K562 (cell line): ENCODE measurements at regions of chr3 and their contacts with region 1.

Region 1: DNA sequence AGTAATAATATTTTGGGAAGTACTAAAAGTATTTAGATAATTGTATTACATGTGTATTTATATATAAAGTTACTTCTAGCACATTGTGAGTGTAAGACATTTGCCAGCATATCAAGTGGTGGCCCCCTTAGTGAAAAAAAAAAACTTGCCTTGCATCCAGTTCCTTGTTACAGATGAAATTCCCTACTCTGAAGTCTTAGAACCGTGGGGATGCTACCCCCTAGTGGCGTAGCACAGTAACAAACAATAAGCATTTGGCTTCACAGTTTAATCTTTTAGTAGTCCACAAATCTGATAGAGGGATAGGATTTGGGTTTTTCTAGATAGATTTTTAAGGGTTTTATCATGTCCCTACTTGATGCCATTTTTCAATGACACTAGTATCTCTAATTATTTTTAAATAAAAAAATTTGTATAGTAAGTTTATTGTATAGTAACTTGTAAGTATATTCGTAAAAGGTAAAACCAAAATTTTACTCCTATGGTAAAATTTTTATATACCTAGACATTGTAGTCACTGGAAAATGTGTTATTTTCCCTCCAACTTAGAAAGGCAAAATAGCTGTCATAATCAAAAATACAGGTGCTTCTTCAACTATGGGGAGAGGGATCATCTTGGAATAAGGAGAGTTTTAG is 14.3 kb downstream of the SMC4 start:
- DNase-seq: peak; percentile 56 to 80 (median 58)
- ATAC-seq: peak; percentile 82
- H3K4me3 ChIP-seq: no peak overlapping the region
- H3K27ac ChIP-seq: no peak overlapping the region
- H3K4me1 ChIP-seq: no peaks in the 10 kb centered on the region
- H3K27me3 ChIP-seq: no peaks in the 10 kb centered on the region
- CTCF ChIP-seq: peak; percentile 58 to 77 (median 75)
- EP300 ChIP-seq: no peak
- POLR2A ChIP-seq: no peak
- RAD21 ChIP-seq: peak; percentile 60 to 79

Region 2: DNA sequence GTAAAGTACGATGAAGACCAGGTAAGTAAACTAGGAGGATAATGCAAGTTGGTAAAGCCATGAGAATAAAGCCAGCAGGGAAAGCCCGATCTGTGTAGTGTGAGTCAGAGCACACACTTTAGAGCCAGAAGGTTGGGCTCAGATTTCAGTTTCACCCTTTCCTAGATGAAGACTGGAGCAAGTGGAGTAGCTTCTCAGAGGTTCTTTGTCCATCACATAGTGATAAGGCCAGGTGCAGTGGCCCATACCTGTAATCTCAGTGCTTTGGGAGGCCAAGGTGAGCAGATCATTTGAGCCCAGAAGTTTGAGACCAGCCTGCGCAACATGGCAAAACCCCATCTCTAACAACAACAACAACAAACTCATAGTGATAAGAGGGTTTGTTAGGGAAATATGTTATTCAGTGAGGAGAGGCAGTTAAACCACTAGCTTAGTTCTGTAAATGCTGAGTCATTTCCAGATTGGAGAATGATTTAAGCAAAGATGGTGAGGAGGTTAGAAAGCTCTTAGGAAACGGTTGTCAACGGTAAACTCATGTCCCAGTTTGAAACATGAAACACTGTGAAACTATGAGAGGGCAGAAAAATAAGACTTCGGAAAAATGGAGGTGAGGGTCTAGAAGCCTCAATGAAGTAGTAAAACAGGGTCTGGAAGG is 386.1 kb before region 1 on chr3:
- CTCF ChIA-PET with region 1: interaction called, 4 read pairs
- POLR2A ChIA-PET with region 1: no interaction called
- in situ Hi-C with region 1: no loop called
- intact Hi-C with region 1: loop called (anchors 5 kb)
- DNase-seq: peak in 1 of 4 experiments; percentile 4
- ATAC-seq: peak; percentile 52
- H3K4me3 ChIP-seq: no peak overlapping the region
- H3K27ac ChIP-seq: no peak overlapping the region
- H3K4me1 ChIP-seq: no peaks in the 10 kb centered on the region; a peak in 2 of 5 replicates
- H3K27me3 ChIP-seq: peaks cover 0 to 6% of the 10 kb centered on the region in 2 experiments
- CTCF ChIP-seq: no peak
- EP300 ChIP-seq: peak; percentile 13
- POLR2A ChIP-seq: no peak
- RAD21 ChIP-seq: no peak

Region 3: DNA sequence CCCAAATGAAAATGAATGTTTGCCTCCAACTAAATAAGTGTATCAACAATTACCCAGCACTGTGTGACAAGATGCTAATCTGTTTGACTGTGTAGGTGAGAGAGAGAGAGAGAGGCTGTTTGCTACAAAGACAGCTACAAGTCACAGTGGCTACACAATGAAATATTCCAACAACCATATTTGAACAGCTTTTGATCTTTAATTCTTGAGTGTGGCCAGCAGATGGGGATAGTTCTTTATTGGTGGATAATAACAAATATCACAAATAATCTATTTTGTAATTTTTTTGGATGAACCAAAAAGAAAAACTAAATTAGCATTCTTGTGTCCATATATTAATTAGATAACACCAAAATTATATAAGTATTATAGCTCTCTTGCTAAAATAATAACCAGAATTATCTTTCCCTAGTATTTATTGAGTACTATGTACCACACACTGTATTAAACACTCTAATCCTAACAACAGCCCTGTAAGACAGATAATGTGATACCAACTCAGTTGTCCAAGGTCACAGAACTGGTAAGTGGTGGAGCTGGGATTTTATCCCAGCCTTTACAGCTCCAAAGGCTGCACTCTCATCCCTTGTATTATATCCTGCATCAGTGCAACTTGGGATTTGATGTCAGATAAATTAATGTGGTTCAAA is 250.4 kb before region 1 on chr3:
- CTCF ChIA-PET with region 1: interaction called, 21 read pairs
- POLR2A ChIA-PET with region 1: interaction called, 3 read pairs
- in situ Hi-C with region 1: no loop called
- intact Hi-C with region 1: loop called (anchors 2 kb)
- DNase-seq: peak in 2 of 4 experiments; percentile 12 to 14
- ATAC-seq: peak; percentile 66
- H3K4me3 ChIP-seq: no peak overlapping the region
- H3K27ac ChIP-seq: no peak overlapping the region
- H3K4me1 ChIP-seq: no peaks in the 10 kb centered on the region
- H3K27me3 ChIP-seq: peaks cover 0 to 2% of the 10 kb centered on the region in 2 experiments; a peak in 1 of 5 replicates
- CTCF ChIP-seq: peak; percentile 35 to 64 (median 38); a peak in 3 of 6 replicates
- EP300 ChIP-seq: no peak
- POLR2A ChIP-seq: no peak
- RAD21 ChIP-seq: peak; percentile 88 to 92

Region 4: DNA sequence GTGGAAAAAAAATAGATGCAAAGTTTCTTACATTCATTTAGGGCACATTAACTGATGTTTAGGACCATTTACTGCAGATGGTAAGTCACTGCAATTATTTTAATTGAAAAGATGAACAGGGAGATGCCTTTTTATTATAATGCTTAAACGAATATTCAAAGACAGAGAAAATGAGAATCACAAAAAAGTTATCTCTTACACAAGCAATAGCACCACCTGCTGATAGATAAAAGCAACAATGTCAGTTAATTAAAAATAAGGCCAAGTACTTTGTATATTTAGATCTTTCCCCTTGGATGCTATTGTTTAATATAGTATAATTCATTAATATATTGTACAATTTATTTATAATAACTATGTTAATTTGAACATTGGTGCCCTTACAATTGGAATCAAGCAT is 70.6 kb before region 1 on chr3:
- CTCF ChIA-PET with region 1: no interaction called
- POLR2A ChIA-PET with region 1: no interaction called
- in situ Hi-C with region 1: no loop called
- intact Hi-C with region 1: loop called (anchors 5 kb)
- DNase-seq: peak in 2 of 4 experiments; percentile 10 to 12
- ATAC-seq: no peak
- H3K4me3 ChIP-seq: no peak overlapping the region
- H3K27ac ChIP-seq: no peak overlapping the region
- H3K4me1 ChIP-seq: no peaks in the 10 kb centered on the region
- H3K27me3 ChIP-seq: no peaks in the 10 kb centered on the region
- CTCF ChIP-seq: peak in 2 of 3 experiments; percentile 35 to 63; a peak in 3 of 6 replicates
- EP300 ChIP-seq: no peak
- POLR2A ChIP-seq: no peak
- RAD21 ChIP-seq: peak; percentile 82 to 85

Region 5: DNA sequence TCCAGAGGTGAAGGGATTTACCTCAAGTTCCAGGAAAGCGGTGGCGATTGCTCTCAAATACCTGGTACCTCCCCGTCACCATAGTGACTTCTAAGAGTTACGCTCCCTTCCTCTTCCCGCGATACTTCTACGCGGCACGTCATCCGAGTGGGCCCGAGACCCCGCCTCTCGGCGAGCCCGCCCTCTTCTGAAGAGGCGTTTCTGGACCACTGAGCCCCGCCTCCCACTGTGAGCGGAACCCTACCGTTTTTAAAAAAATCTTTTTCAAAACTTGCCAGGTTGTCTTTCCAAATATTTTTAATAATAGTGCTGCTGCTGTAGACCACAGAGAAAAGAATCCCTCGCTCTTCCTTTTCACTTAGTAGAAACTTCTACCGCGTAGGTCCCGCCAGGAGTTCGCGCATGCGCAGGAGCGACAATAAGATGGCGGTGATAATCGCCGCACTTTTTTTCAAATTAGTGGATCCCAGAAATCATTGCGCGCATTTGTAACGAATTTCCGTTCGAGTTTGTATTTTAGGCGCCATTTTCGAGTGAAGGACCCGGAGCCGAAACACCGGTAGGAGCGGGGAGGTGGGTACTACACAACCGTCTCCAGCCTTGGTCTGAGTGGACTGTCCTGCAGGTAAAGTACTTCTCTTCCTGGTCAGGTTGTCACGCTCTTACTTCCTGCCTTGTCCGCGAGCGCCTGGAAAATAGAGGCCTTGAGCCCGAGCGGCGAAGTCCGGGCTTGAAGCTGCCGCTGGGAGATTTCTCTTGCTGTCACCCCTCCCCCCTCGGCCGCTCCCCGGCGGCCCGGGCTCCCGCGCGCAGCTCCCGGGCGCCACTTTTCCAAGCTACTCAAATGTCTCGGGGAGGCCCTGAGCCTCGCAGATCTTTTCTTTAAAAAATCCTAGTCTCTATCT is 14.4 kb before region 1 on chr3 and contains the starts of genes IFT80 and SMC4:
- CTCF ChIA-PET with region 1: no interaction called
- POLR2A ChIA-PET with region 1: interaction called, 38 read pairs
- in situ Hi-C with region 1: no loop called
- intact Hi-C with region 1: no loop called
- DNase-seq: peak; percentile 92 to 97 (median 94)
- ATAC-seq: peak; percentile 81
- H3K4me3 ChIP-seq: peak within 1 kb of the TSS; percentile 71
- H3K27ac ChIP-seq: peak within 1 kb of the TSS; percentile 99
- H3K4me1 ChIP-seq: peaks cover 8 to 14% of the 10 kb centered on the region in 2 experiments
- H3K27me3 ChIP-seq: no peaks in the 10 kb centered on the region
- CTCF ChIP-seq: no peak; a peak in 1 of 6 replicates
- EP300 ChIP-seq: peak; percentile 66
- POLR2A ChIP-seq: peak; percentile 95
- RAD21 ChIP-seq: no peak
- polyA plus RNA-seq, gene IFT80: 6.7 to 7.2 TPM
- polyA plus RNA-seq, gene SMC4: 87.9 to 105 TPM